Vagina (tissue), 2 donors: ENCODE measurements at regions of chr18 and their contacts with region 1.

Region 1: GRCh38 chr18:50967714-50968661 is at the start of gene ELAC1:
- DNase-seq: no peak
- H3K4me3 ChIP-seq: peak within 1 kb of the TSS; percentile 67 to 99
- H3K27ac ChIP-seq: peak within 1 kb of the TSS; percentile 95
- H3K4me1 ChIP-seq: peaks cover 15% of the 10 kb centered on the region
- H3K27me3 ChIP-seq: no peaks in the 10 kb centered on the region
- CTCF ChIP-seq: no peak
- POLR2A ChIP-seq: peak in 1 of 2 donors; percentile 75
- total RNA-seq, gene ELAC1: 15.5 TPM

Region 2: DNA sequence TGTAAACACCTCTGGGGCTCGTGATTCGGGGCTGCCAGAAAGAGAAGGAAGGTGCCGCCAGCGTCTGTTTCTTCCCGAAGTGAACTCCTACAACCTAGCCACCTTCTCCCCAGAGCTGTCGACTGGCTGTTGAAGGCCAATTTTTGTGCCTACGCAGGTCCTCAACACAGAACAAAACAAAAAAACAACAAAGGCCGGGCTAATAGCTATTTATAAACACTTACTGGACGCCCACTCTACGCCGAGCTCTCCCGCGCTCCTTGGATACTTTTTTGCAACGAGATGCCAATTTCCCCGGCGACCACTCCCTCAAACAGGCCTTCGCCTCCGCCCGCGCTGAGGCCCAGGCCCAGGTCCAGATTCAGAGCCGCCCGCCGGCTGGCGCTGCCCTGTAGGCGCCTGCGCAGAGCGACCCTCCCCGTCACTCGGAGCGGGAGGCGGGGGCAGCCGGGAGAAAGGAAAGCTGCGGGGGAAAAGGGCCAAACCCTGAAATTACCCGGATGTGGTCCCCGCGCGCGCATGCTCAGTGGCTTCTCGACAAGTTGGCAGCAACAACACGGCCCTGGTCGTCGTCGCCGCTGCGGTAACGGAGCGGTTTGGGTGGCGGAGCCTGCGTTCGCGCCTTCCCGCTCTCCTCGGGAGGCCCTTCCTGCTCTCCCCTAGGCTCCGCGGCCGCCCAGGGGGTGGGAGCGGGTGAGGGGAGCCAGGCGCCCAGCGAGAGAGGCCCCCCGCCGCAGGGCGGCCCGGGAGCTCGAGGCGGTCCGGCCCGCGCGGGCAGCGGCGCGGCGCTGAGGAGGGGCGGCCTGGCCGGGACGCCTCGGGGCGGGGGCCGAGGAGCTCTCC is 61.9 kb after region 1 on chr18 and contains the start of gene SMAD4:
- intact Hi-C with region 1: loop called (anchors 5 kb)
- DNase-seq: peak in 1 of 2 donors; percentile 96
- H3K4me3 ChIP-seq: peak within 1 kb of the TSS; percentile 74 to 79
- H3K27ac ChIP-seq: peak within 1 kb of the TSS; percentile 95
- H3K4me1 ChIP-seq: peaks cover 59% of the 10 kb centered on the region
- H3K27me3 ChIP-seq: no peaks in the 10 kb centered on the region
- CTCF ChIP-seq: no peak
- POLR2A ChIP-seq: peak in 1 of 2 donors; percentile 80
- total RNA-seq, gene SMAD4: 75.1 TPM

Region 3: DNA sequence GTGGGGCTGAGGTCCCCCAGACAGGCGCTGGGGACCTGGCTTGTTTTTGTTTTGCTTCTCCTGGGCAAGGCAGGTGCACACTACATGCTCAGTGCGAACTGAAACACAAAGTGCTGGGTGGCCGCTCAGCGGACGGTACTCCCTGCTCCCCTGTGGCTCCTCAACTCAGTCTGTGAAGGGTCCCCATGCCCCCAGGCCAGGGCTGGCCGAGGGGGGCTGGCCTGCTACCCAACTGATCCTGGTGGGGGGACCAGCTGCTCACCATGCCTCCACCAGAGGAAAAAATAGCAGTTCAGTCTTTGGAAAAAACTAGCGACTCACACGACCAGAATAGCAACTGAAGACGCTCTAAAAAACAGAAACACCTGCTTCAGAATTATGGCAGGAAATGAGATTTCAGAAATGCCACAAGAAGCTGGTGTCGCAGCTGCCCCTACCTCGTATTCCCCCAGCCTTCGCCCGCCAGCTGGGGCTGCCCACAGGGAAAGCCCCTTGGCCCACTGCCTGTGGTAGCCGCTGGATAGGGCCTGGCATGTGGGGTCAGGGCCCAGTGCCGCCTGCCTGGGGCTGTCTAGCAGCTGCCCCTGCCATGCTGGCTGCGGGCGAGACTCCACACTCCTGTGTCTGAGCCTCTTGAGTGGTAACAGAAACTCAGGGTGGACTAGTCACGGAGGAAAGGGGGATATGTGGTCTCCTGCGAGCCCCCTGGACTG is 185.8 kb after region 1 on chr18:
- intact Hi-C with region 1: no loop called
- DNase-seq: no peak
- H3K4me3 ChIP-seq: no peak overlapping the region
- H3K27ac ChIP-seq: no peak overlapping the region
- H3K4me1 ChIP-seq: no peaks in the 10 kb centered on the region
- H3K27me3 ChIP-seq: no peaks in the 10 kb centered on the region
- CTCF ChIP-seq: no peak
- POLR2A ChIP-seq: no peak